ENCODE measurements at regions of chr5 and their contacts with region 1.

Region 1: DNA sequence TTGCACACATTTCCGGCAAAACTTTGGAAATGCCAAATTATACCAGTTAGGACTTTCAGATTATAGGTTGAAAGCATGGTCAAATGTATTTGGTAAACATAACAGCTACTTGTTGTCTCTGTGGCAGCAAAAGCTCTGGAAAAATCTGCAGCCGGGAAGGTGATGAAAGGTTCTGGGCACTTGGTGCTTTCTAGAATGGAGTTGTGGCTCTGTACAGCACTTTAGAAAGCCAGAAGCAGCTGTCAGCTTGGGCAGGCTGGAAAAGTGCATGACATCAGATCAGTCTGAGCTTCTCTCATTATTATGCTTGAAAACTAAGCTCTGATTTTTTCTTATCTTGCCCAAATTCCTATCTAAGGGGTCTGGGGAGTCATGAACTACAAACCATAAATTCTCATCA is 118.6 kb upstream of the MAST4 start:
- DNase-seq: no peak
- H3K4me3 ChIP-seq: no peak overlapping the region
- H3K27ac ChIP-seq: no peak overlapping the region
- H3K4me1 ChIP-seq: no peaks in the 10 kb centered on the region
- CTCF ChIP-seq: no peak

Region 2: GRCh38 chr5:66742083-66742895 is 264.7 kb after region 1 on chr5:
- CTCF ChIA-PET with region 1: no interaction called
- POLR2A ChIA-PET with region 1: no interaction called
- intact Hi-C with region 1: loop called (anchors 10 kb)
- DNase-seq: peak; percentile 21
- H3K4me3 ChIP-seq: no peak overlapping the region
- H3K27ac ChIP-seq: no peak overlapping the region
- H3K4me1 ChIP-seq: no peaks in the 10 kb centered on the region
- CTCF ChIP-seq: peak; percentile 58

Region 3: GRCh38 chr5:66958980-66959641 is 481.5 kb after region 1 on chr5:
- CTCF ChIA-PET with region 1: no interaction called
- POLR2A ChIA-PET with region 1: no interaction called
- intact Hi-C with region 1: no loop called
- DNase-seq: no peak
- H3K4me3 ChIP-seq: no peak overlapping the region
- H3K27ac ChIP-seq: no peak overlapping the region
- H3K4me1 ChIP-seq: no peaks in the 10 kb centered on the region
- CTCF ChIP-seq: no peak

Measured in OCI-LY7 (cell line).